A549 (cell line): ENCODE measurements at regions of chrX and their contacts with region 1.

Region 1: GRCh38 chrX:100768679-100769338 is 36.9 kb upstream of the SYTL4 start:
- DNase-seq: peak; percentile 43 to 61
- ATAC-seq: peak; percentile 30 to 71; a peak in 4 of 6 replicates
- H3K4me3 ChIP-seq: no peak overlapping the region
- H3K27ac ChIP-seq: no peak overlapping the region
- H3K4me1 ChIP-seq: no peaks in the 10 kb centered on the region
- CTCF ChIP-seq: peak; percentile 99
- EP300 ChIP-seq: no peak
- POLR2A ChIP-seq: no peak
- RAD21 ChIP-seq: peak; percentile 95 to 96

Region 2: GRCh38 chrX:100674705-100675104 is 94.1 kb before region 1 on chrX:
- CTCF ChIA-PET with region 1: interaction called, 187 read pairs
- POLR2A ChIA-PET with region 1: no interaction called
- DNase-seq: no peak
- ATAC-seq: no peak
- H3K4me3 ChIP-seq: no peak overlapping the region
- H3K27ac ChIP-seq: no peak overlapping the region
- H3K4me1 ChIP-seq: no peaks in the 10 kb centered on the region
- CTCF ChIP-seq: no peak
- EP300 ChIP-seq: no peak
- POLR2A ChIP-seq: no peak
- RAD21 ChIP-seq: no peak

Region 3: GRCh38 chrX:100695302-100695701 is 73.5 kb before region 1 on chrX:
- CTCF ChIA-PET with region 1: interaction called, 18 read pairs
- POLR2A ChIA-PET with region 1: no interaction called
- DNase-seq: no peak
- ATAC-seq: no peak
- H3K4me3 ChIP-seq: no peak overlapping the region
- H3K27ac ChIP-seq: no peak overlapping the region
- H3K4me1 ChIP-seq: no peaks in the 10 kb centered on the region
- CTCF ChIP-seq: no peak
- EP300 ChIP-seq: no peak
- POLR2A ChIP-seq: no peak
- RAD21 ChIP-seq: no peak

Region 4: DNA sequence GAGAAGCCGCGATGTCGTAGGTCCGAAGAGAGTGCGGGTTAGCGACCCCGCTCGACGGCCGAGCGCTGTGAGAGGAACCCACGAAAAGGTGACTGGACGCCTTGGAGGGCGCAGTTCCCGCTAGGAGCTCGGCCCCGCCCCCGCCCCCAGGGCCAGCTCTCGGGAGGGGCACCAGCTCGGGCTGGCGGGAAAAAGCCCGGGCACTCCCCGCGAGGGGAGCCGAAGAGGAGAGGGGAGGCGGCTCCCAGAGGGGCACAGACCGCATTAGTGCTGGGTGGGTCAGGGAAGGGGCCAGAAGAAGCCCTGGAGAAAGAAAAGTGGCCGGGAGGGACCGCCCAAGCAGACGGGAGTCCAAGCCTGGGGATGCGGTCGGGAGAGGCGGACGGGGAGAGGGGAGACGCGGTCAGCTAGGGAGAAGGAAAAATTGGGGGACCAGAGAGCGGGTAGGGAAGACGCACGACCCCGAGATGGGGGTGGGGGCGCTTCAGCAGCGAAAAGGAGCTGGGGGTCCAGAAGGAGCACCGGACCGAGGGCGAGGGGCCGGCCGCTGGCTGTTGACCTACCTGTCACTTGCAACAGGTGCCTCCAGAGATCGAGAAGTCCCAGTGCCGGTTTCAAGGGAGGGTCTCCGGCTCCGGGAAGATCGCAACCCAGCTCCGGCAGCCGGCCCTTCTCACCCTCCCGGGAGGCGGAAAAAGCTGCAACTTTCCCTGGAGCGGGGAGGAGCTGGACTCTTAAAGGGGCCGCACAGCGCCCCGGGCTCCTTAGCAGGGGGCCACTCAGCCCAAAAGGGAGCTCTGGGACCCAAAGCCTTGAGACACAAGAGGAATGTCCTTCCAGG is 37.1 kb before region 1 on chrX and contains the start of gene SYTL4:
- CTCF ChIA-PET with region 1: interaction called, 18 read pairs
- POLR2A ChIA-PET with region 1: no interaction called
- DNase-seq: peak in 1 of 2 experiments; percentile 49
- ATAC-seq: peak; percentile 84 to 90
- H3K4me3 ChIP-seq: peak within 1 kb of the TSS; percentile 93
- H3K27ac ChIP-seq: peak within 1 kb of the TSS; percentile 69 to 85
- H3K4me1 ChIP-seq: no peaks in the 10 kb centered on the region
- CTCF ChIP-seq: no peak
- EP300 ChIP-seq: no peak
- POLR2A ChIP-seq: no peak
- RAD21 ChIP-seq: no peak
- polyA plus RNA-seq, gene SYTL4: 3.9 and 4.3 TPM in 2 replicates